Heart right ventricle (tissue), 16 donors: ENCODE measurements at regions of chr5 and their contacts with region 1.

Region 1: DNA sequence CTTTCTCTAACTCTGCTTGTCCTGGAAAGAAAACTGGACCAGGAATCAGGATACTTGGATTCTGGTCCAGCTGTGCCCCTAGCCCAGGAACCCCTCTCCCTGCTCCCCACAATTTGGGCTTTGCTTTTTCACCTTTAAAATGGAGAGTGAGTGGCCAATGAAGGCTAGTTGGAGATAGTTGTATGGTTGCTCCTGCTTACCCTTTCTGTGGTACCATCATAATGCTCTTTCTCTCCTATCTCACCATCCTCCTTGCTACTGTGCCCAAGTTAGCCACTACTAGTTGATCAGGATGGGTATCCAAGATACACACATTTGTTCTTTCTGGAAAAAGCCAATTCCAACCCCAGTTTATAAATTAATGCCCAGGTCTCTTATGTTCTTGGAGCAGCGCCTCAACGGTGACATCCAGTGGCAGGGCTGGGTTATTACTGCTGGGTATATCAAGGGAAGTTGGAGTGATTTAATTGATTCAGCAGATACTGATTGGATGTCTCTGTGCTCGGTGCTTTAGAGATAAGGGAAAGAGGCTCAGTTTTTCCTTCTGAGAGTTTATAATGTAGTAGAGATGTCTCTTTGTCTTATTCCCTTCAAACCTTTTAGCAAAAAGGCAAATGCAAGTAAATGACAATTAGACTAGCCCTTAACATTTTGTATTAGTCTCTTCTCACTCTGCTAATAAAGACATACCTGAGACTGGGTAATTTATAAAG is 38.6 kb downstream of the FAXDC2 start:
- DNase-seq: peak; percentile 36 to 60
- ATAC-seq: peak; percentile 33 to 74 (median 62)
- H3K4me3 ChIP-seq: no peak overlapping the region
- H3K27ac ChIP-seq: peak overlapping the region in 1 of 10 donors; percentile 9
- H3K4me1 ChIP-seq: peaks cover 0 to 17% (median 4%) of the 10 kb centered on the region in 9 donors
- H3K27me3 ChIP-seq: no peaks in the 10 kb centered on the region
- CTCF ChIP-seq: peak; percentile 81 to 92 (median 90)

Region 2: DNA sequence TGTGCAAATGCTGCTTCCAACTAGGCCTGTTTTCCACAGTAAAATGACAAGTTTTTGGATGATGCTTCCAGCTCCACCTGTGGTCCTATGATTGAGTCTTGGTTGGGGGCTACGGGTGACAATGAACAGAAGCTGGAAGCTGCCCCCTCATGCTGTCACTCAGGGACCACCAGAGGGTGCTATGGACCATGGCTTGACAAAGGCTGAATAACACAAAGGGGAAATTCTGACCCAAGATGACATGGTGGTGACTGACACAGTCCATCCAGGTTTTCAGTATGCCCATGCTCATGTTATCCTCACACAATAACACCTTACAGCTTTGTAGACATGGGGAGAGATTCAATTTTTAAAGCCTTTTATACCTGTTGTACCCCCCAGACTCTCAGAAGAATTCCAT is 389.9 kb before region 1 on chr5:
- intact Hi-C with region 1: no loop called
- DNase-seq: no peak
- ATAC-seq: peak in 1 of 8 donors; percentile 33
- H3K4me3 ChIP-seq: no peak overlapping the region
- H3K27ac ChIP-seq: no peak overlapping the region
- H3K4me1 ChIP-seq: no peaks in the 10 kb centered on the region
- H3K27me3 ChIP-seq: no peaks in the 10 kb centered on the region
- CTCF ChIP-seq: peak in 7 of 9 donors; percentile 31 to 50 (median 45)

Region 3: GRCh38 chr5:154647114-154647760 is 164.6 kb before region 1 on chr5:
- intact Hi-C with region 1: loop called in 9 of 10 experiments (anchors 1 to 5 kb)
- DNase-seq: peak; percentile 22 to 43
- ATAC-seq: peak; percentile 26 to 78 (median 61)
- H3K4me3 ChIP-seq: peak overlapping the region in 9 of 10 donors; percentile 13 to 54 (median 42)
- H3K27ac ChIP-seq: no peak overlapping the region
- H3K4me1 ChIP-seq: peaks cover 3 to 21% (median 10%) of the 10 kb centered on the region in 9 donors
- H3K27me3 ChIP-seq: peaks cover 0 to 22% (median 6%) of the 10 kb centered on the region in 7 donors
- CTCF ChIP-seq: no peak

Region 4: GRCh38 chr5:154654486-154655371 is 157.1 kb before region 1 on chr5:
- intact Hi-C with region 1: loop called (anchors 1 to 5 kb)
- DNase-seq: no peak
- ATAC-seq: peak in 7 of 8 donors; percentile 10 to 66 (median 48)
- H3K4me3 ChIP-seq: peak overlapping the region in 6 of 10 donors; percentile 6 to 28 (median 18)
- H3K27ac ChIP-seq: peak overlapping the region; percentile 3 to 78 (median 61)
- H3K4me1 ChIP-seq: peaks cover 6 to 24% (median 22%) of the 10 kb centered on the region in 9 donors
- H3K27me3 ChIP-seq: no peaks in the 10 kb centered on the region
- CTCF ChIP-seq: no peak

Region 5: GRCh38 chr5:155040984-155041653 is 229.3 kb after region 1 on chr5:
- intact Hi-C with region 1: no loop called
- DNase-seq: no peak
- ATAC-seq: no peak
- H3K4me3 ChIP-seq: no peak overlapping the region
- H3K27ac ChIP-seq: no peak overlapping the region
- H3K4me1 ChIP-seq: no peaks in the 10 kb centered on the region
- H3K27me3 ChIP-seq: no peaks in the 10 kb centered on the region
- CTCF ChIP-seq: no peak